Endothelial cell of umbilical vein (primary cell): ENCODE measurements at regions of chr15 and their contacts with region 1.

Region 1: GRCh38 chr15:65869127-65869953 is at the start of gene RAB11A:
- DNase-seq: peak; percentile 96
- H3K4me3 ChIP-seq: peak within 1 kb of the TSS; percentile 47 to 91 (median 81)
- H3K27ac ChIP-seq: peak within 1 kb of the TSS; percentile 61
- H3K4me1 ChIP-seq: peaks cover 22% of the 10 kb centered on the region
- H3K27me3 ChIP-seq: no peaks in the 10 kb centered on the region
- CTCF ChIP-seq: peak; percentile 19 to 41
- POLR2A ChIP-seq: peak; percentile 98
- total RNA-seq, gene RAB11A: 250 and 257 TPM in 2 replicates

Region 2: GRCh38 chr15:65610871-65611718 is 258.2 kb before region 1 on chr15 and contains the start of gene INTS14:
- CTCF ChIA-PET with region 1: interaction called, 5 read pairs
- POLR2A ChIA-PET with region 1: no interaction called
- dilution Hi-C with region 1: no loop called
- intact Hi-C with region 1: loop called (anchors 1 kb)
- DNase-seq: peak; percentile 95
- H3K4me3 ChIP-seq: peak within 1 kb of the TSS; percentile 87 to 96 (median 96)
- H3K27ac ChIP-seq: peak within 1 kb of the TSS; percentile 84
- H3K4me1 ChIP-seq: peaks cover 20% of the 10 kb centered on the region
- H3K27me3 ChIP-seq: no peaks in the 10 kb centered on the region
- CTCF ChIP-seq: peak; percentile 60 to 71
- POLR2A ChIP-seq: peak; percentile 97
- total RNA-seq, gene INTS14: 41.7 and 44.6 TPM in 2 replicates

Region 3: DNA sequence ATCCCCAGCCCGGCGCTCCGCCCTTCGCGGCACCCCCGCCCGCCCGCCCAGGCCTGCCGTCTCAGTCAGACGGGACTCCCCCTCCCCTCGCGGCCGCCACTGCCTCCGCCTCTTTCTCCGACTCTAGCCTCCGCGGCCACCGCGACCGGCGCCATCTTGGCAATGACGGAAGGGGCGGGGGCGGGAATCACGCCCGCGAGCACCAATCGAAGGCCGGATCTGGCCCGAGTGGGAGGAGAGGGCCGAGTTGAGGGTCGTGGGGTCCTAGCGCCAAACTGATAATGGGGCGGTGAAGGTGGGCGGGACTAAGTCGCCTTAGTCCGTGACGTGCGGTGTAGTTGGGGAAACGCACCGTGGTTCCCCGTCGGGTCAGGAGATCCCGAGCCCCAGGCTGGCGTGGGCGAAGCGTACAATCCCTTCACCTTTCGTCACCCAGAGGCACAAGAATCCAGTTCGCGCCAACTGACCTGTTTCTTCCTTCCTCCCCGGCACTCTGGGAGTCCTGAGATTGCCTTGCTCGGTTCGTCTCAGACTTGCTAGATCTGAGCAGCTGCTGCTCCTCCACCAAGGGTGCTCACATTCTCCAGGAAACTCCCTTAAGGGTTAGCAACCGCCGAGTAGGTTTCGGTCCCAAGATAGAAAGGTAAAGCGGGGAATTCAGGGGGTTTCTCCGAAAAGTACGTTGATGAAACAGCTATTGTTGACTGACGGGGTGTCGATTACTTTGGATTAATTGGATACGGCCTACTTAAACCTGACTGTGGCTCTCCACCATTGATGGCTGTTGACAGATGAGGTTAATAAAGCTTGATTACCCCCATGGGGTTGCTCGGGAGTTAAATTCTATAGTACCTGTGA is 77.0 kb before region 1 on chr15 and contains the start of gene DENND4A:
- CTCF ChIA-PET with region 1: interaction called, 3 read pairs
- POLR2A ChIA-PET with region 1: interaction called, 3 read pairs
- dilution Hi-C with region 1: no loop called
- intact Hi-C with region 1: loop called (anchors 1 kb)
- DNase-seq: peak; percentile 99
- H3K4me3 ChIP-seq: peak within 1 kb of the TSS; percentile 85 to 91 (median 89)
- H3K27ac ChIP-seq: peak within 1 kb of the TSS; percentile 81
- H3K4me1 ChIP-seq: peaks cover 40% of the 10 kb centered on the region
- H3K27me3 ChIP-seq: no peaks in the 10 kb centered on the region
- CTCF ChIP-seq: no peak
- POLR2A ChIP-seq: peak; percentile 84
- total RNA-seq, gene DENND4A: 22.2 and 25.2 TPM in 2 replicates

Region 4: GRCh38 chr15:65856821-65857455 is 12.4 kb before region 1 on chr15:
- CTCF ChIA-PET with region 1: interaction called, 19 read pairs
- POLR2A ChIA-PET with region 1: interaction called, 9 read pairs
- dilution Hi-C with region 1: no loop called
- intact Hi-C with region 1: no loop called
- DNase-seq: peak; percentile 49
- H3K4me3 ChIP-seq: no peak overlapping the region
- H3K27ac ChIP-seq: no peak overlapping the region
- H3K4me1 ChIP-seq: no peaks in the 10 kb centered on the region
- H3K27me3 ChIP-seq: no peaks in the 10 kb centered on the region
- CTCF ChIP-seq: peak; percentile 74 to 81
- POLR2A ChIP-seq: no peak